ENCODE measurements at regions of chr9 and their contacts with region 1.

Region 1: DNA sequence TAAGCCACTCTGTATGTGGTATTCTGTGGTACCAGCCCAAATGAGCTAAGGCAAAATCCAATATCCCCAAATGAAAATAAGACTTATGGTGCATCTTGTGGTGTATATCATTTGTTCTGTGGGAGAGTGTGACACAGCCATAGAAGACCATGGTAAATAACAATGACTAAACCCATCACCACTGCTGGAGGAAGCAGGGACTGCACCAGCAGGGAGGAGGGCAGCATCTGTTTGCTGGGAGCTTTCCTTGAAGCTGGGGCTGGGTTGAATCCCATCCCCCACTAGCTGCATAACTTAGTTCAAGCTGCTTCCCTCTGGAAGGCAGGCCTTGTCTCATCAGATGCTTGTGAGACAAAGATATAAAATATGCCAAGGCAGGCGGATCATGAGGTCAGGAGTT is 14.2 kb downstream of the GADD45G start:
- DNase-seq: no peak
- ATAC-seq: no peak

Region 2: GRCh38 chr9:89750147-89750861 is 131.3 kb after region 1 on chr9:
- intact Hi-C with region 1: loop called in 1 of 2 experiments (anchors 10 kb)
- DNase-seq: peak; percentile 59
- ATAC-seq: peak; percentile 69 to 71

Measured in left cardiac atrium (tissue), 4 donors.